ENCODE measurements at regions of chr6 and their contacts with region 1.

Region 1: GRCh38 chr6:148559848-148560433 is 186.9 kb upstream of the UST start:
- H3K4me3 ChIP-seq: peak overlapping the region; percentile 49
- H3K27ac ChIP-seq: peak overlapping the region; percentile 29; the same call in 1 of the 2 replicates
- H3K4me1 ChIP-seq: no peaks in the 10 kb centered on the region
- CTCF ChIP-seq: peak; percentile 69

Region 2: GRCh38 chr6:148548065-148548748 is 11.7 kb before region 1 on chr6:
- CTCF ChIA-PET with region 1: interaction called, 12 read pairs
- POLR2A ChIA-PET with region 1: no interaction called
- H3K4me3 ChIP-seq: no peak overlapping the region
- H3K27ac ChIP-seq: no peak overlapping the region
- H3K4me1 ChIP-seq: no peaks in the 10 kb centered on the region
- CTCF ChIP-seq: no peak

Region 3: DNA sequence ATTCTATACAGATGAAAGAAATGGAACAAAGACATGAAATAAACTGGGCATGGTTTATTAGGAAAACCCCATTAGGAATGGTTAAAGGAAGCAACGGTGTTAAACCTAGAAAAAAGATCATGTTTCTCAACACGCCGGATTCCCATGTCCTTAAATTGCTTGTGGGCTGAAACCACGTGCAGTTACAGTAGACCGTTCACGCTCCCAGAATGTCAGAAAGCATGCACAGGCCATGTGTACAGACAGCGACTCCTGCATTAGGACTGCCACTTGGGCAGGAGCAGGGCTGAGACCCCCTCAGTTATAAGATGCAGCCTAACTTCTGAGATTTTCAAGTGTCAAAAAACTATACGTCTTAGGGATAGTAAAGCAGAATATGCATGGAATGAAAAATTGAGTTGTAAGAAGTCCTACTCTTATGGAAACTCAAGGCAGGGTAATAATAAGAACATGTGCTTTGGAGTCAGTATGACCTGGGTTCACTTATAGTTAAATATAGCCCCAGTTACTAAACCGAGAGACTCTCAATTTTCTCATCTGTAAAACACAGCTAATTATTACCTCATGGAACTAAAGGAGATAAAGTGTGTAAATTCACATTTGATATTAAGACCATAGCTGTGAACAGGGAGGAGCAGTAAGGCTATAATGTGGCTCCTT is 12.9 kb after region 1 on chr6:
- CTCF ChIA-PET with region 1: interaction called, 41 read pairs
- POLR2A ChIA-PET with region 1: no interaction called
- H3K4me3 ChIP-seq: no peak overlapping the region
- H3K27ac ChIP-seq: no peak overlapping the region
- H3K4me1 ChIP-seq: no peaks in the 10 kb centered on the region
- CTCF ChIP-seq: no peak

Region 4: DNA sequence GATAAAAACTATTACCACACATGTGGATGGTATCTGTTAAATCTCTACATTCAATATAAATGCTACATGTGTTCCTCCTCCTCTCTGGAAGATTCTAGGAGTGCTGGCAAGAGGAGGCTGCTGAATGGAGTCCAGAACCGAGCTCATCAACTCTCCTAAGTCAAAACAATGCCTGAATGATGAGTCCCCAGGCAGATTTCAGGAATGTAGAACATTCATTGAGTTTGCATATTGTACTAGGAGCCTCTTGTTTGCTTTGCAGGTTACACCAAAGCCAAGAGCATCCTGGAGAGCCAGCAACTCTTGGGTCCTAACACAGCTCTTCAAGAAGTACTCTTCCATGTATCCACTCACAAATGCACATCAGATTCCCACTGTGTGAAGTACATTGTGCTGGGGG is 69.2 kb after region 1 on chr6:
- CTCF ChIA-PET with region 1: interaction called, 10 read pairs
- POLR2A ChIA-PET with region 1: no interaction called
- H3K4me3 ChIP-seq: no peak overlapping the region
- H3K27ac ChIP-seq: no peak overlapping the region
- H3K4me1 ChIP-seq: peaks cover 4% of the 10 kb centered on the region
- CTCF ChIP-seq: no peak

Region 5: GRCh38 chr6:148758492-148758891 is 198.6 kb after region 1 on chr6:
- CTCF ChIA-PET with region 1: no interaction called
- POLR2A ChIA-PET with region 1: no interaction called
- H3K4me3 ChIP-seq: no peak overlapping the region
- H3K27ac ChIP-seq: no peak overlapping the region
- H3K4me1 ChIP-seq: peaks cover 24% of the 10 kb centered on the region
- CTCF ChIP-seq: no peak

Region 6: DNA sequence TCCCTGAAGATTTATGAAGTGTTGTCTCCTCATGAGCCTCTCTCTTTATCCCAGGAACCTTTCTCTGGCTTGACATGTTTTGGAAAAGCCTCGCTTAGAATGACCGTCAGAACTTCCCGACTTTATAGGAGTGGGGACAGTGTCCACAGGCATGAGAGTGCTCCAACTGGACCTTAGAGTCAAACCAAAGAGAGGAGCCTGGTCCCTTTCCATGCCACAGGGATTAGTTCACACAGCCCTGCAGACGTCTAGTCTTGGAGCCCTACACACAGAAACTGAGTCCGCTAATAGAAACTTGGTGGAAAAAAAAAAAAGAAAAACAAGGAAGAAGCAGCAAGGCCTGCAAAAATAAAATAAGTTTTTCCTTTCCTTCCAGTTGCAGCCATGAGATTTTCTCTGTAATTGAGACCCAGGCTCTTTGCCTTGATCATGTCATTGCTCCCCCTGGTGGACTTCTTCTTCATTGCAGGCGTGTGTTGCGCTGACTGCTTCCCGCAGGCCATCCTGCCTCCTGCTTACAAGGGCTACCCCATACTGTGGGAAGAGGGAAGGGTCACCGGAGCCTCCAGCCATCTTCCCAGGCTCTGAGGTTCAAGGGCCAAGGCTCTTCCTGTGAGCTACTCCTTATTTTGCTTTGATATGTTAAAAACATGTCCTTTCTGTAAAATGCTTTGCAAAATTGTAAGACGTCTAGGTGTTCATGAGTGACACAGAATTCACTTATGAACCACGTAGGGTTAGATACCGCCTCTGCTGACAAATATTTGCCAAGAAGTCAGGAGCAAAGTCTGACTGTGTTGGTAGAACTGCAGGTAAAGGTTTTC is 387.9 kb after region 1 on chr6:
- CTCF ChIA-PET with region 1: interaction called, 10 read pairs
- POLR2A ChIA-PET with region 1: no interaction called
- H3K4me3 ChIP-seq: no peak overlapping the region
- H3K27ac ChIP-seq: no peak overlapping the region
- H3K4me1 ChIP-seq: peaks cover 11% of the 10 kb centered on the region
- CTCF ChIP-seq: peak; percentile 66